Mucosa of descending colon (tissue), 3 donors: ENCODE measurements at regions of chr3 and their contacts with region 1.

Region 1: DNA sequence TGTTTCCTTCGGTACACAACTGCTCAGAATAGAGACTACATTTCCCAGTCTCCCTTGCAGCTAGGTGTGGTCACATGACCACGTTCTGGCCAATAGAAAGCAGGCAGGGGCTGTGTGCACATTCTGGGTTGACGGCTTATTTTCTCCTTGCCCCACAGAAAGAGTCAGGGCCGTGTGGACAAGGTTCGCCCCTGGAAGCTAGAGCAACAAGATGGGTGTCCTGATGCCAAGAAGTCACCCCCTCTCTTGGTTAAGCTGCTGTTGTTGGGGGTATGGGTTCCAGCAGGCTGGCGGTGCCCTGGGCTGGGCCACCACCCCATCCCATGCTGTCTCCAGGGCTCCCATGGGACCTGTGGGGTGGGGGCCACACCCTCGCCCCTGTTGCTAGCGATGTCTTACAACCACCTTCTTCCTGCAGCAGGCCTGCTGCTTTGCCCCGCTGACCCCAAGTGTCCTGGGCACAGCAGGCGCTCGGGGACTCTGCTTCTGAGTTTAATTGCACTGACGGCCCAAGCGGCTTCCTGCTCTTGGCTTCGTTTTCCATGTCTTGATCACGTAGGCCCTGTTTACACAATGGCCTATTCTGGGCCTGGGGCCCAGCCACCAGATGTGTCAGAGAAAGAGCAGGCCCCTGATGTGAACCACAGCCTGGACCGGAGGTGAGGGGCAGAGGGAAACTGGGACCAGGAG is 24.9 kb downstream of the ABTB1 start:
- DNase-seq: peak; percentile 62 to 75 (median 67)
- ATAC-seq: peak; percentile 72
- H3K4me3 ChIP-seq: no peak overlapping the region
- H3K4me1 ChIP-seq: peaks cover 23% of the 10 kb centered on the region
- CTCF ChIP-seq: no peak

Region 2: DNA sequence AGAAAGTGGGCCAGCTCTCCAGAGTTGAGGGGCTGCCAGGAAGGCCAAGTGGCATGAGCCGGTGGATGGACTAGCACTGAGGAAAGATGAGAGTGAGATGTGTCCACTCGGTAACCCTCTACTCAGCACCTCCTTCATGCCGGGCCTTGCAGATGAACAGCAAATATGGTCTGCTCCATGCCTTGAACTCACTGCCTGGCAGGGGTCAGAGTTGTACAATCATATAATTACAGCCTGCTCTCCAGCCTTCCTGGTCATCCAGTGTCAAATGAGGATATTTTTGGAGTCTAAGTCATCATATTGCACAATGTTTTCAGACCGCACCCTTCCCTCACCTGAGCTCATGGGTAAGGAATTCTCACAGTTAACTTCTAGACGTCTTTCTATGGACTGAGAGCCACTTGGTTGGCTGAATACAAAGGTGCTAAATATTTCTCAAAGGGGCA is 119.7 kb after region 1 on chr3:
- intact Hi-C with region 1: loop called in 1 of 2 experiments (anchors 10 kb)
- DNase-seq: peak in 2 of 3 donors; percentile 48 to 72
- ATAC-seq: peak; percentile 65
- H3K4me3 ChIP-seq: no peak overlapping the region
- H3K4me1 ChIP-seq: peaks cover 55% of the 10 kb centered on the region
- CTCF ChIP-seq: no peak